A673 (cell line): ENCODE measurements at regions of chr2 and their contacts with region 1.

Region 1: DNA sequence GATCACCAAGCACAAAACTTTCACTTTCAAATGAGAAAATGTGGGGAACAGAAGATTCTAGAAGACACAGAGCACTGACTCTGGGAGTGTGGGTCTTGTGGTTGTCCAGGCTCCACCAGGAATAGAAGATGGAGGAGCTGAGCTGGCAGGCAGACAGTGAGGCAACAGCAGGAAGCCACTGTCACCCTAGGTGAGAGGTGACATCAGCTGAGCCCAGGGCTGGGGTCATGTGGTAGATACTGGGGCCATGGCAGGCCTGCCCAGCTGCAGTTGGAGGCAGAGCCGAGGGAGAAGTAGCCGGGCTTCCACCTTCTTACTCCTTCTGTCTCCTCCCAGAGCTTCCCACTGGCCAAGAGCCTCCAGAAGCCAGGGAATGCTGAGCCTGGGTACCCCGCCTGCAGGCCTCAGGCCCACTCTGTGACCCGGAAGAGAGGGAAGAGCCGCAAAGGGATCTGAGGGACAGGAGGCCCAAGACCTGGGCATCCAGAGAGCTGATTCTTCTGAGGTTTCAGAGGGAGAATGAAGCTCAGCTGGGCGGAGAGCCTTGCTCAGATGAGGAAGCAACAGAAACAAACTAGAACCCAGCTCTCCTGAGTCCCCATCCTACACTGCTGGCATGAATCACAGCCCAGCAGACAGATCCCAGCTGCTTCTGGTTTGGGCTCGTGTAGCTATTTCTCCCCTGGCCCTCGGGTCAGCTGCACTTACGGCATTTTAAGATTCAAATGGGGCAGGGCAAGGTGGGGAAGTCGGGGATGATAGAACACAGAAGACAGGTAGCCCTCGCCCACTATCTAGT is 39.8 kb upstream of the ASAP2 start:
- DNase-seq: no peak
- H3K4me3 ChIP-seq: no peak overlapping the region
- H3K27ac ChIP-seq: no peak overlapping the region
- H3K4me1 ChIP-seq: no peaks in the 10 kb centered on the region
- H3K27me3 ChIP-seq: no peaks in the 10 kb centered on the region
- CTCF ChIP-seq: no peak

Region 2: GRCh38 chr2:8993196-8993901 is 173.4 kb before region 1 on chr2:
- CTCF ChIA-PET with region 1: no interaction called
- POLR2A ChIA-PET with region 1: no interaction called
- intact Hi-C with region 1: no loop called
- DNase-seq: no peak
- H3K4me3 ChIP-seq: no peak overlapping the region
- H3K27ac ChIP-seq: no peak overlapping the region
- H3K4me1 ChIP-seq: peaks cover 4% of the 10 kb centered on the region
- H3K27me3 ChIP-seq: no peaks in the 10 kb centered on the region
- CTCF ChIP-seq: no peak

Region 3: GRCh38 chr2:9184361-9184760 is 17.6 kb after region 1 on chr2:
- CTCF ChIA-PET with region 1: no interaction called
- POLR2A ChIA-PET with region 1: interaction called, 19 read pairs
- intact Hi-C with region 1: no loop called
- DNase-seq: no peak
- H3K4me3 ChIP-seq: no peak overlapping the region
- H3K27ac ChIP-seq: no peak overlapping the region
- H3K4me1 ChIP-seq: peaks cover 6% of the 10 kb centered on the region
- H3K27me3 ChIP-seq: no peaks in the 10 kb centered on the region
- CTCF ChIP-seq: no peak